B cell (primary cell): ENCODE measurements at regions of chr12 and their contacts with region 1.

Region 1: GRCh38 chr12:12716793-12717585 is at the start of gene CDKN1B:
- DNase-seq: peak; percentile 92
- ATAC-seq: peak; percentile 64
- H3K4me3 ChIP-seq: peak within 1 kb of the TSS; percentile 82 to 100 (median 96)
- H3K4me3 Mint-ChIP-seq: peak within 1 kb of the TSS; percentile 97
- H3K27ac ChIP-seq: peak within 1 kb of the TSS; percentile 94 to 96
- H3K27ac Mint-ChIP-seq: peak within 1 kb of the TSS; percentile 98
- H3K4me1 ChIP-seq: peaks cover 49 to 53% of the 10 kb centered on the region in 2 donors
- H3K4me1 Mint-ChIP-seq: peaks cover 66% of the 10 kb centered on the region
- H3K27me3 ChIP-seq: no peaks in the 10 kb centered on the region
- H3K27me3 Mint-ChIP-seq: no peaks in the 10 kb centered on the region
- CTCF ChIP-seq: no peak
- total RNA-seq, gene CDKN1B: 133 and 149 TPM in 2 replicates

Region 2: DNA sequence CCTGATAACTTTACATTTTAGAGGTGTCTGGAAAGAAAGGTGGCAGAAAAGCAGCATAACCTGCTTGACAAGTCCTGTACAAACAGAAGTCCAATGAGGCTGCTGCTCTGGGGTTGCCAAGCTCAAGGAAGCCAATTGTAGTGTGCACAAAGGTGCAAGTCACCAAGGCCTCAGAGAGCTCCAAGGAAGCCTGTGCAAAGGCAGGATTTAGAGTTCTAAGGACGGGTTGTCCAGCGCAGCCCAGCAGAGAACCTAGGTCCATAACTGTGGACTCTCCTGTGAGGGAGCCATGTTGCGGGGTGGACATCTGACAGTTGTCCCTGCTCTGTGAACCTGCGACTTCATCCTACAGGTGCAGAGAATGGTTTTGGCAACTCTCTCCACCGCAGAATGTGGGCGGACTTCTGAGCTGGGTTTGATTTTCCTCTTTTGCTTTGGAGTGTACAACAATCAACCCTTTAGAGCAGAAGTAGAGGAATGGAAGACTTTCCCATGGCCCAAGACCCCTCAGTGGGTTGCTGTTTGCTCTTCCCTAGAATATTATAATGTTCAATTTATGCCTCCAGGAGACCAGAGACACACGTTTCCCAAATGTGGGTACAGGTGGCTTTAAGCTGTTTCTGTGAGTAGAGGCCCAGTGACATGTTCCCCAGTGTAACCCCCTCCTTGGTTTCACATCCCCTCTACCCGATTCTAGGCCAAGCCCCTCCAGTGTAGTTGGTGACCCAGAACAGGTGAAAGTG is 986.5 kb before region 1 on chr12:
- CTCF ChIA-PET with region 1: no interaction called
- POLR2A ChIA-PET with region 1: no interaction called
- intact Hi-C with region 1: loop called (anchors 10 kb)
- DNase-seq: peak; percentile 83
- ATAC-seq: peak; percentile 80
- H3K4me3 ChIP-seq: no peak overlapping the region
- H3K4me3 Mint-ChIP-seq: peak overlapping the region; percentile 79
- H3K27ac ChIP-seq: peak overlapping the region; percentile 69 to 76
- H3K27ac Mint-ChIP-seq: peak overlapping the region; percentile 94
- H3K4me1 ChIP-seq: peaks cover 82 to 94% of the 10 kb centered on the region in 2 donors
- H3K4me1 Mint-ChIP-seq: peaks cover 92% of the 10 kb centered on the region
- H3K27me3 ChIP-seq: no peaks in the 10 kb centered on the region
- H3K27me3 Mint-ChIP-seq: no peaks in the 10 kb centered on the region
- CTCF ChIP-seq: no peak

Region 3: DNA sequence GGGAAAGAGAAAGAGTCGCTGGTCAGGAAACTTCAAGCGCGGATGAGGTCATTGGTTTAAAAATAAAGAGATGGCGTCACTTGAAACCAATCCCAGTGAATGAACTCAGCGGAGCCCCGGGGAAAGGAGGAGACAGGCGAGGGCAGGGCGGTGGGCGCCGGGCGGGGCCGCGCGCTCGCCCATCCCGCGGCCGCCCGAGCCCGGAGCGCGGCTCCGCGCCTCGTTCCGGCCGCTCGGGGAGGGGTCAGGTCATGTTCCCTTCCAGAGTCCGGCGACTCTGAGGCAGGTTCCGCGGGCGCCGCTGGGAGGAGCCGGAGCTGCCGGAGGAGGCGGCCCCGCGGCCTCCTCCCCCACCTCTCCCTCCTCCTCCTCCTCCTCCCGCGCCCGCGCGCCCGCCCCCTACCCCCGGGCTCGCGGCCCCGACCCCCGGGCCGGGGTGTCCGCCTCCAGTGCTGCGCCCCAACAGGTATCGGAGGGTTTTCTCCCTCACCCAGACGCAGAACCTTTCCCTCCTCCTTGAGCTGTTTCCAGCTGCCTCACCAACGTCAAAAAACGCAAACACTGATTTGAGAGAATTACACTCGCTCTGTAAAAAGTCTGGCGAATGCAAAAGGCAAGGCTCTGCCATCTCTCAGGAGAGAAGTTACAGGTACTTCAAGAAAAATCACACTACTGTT is 154.3 kb before region 1 on chr12 and contains the start of gene DUSP16:
- CTCF ChIA-PET with region 1: no interaction called
- POLR2A ChIA-PET with region 1: interaction called, 4 read pairs
- intact Hi-C with region 1: loop called (anchors 2 kb)
- DNase-seq: peak; percentile 90
- ATAC-seq: peak; percentile 70
- H3K4me3 ChIP-seq: peak within 1 kb of the TSS; percentile 55 to 78 (median 72)
- H3K4me3 Mint-ChIP-seq: peak within 1 kb of the TSS; percentile 95
- H3K27ac ChIP-seq: peak within 1 kb of the TSS; percentile 38 to 82
- H3K27ac Mint-ChIP-seq: peak within 1 kb of the TSS; percentile 92
- H3K4me1 ChIP-seq: peaks cover 17 to 18% of the 10 kb centered on the region in 2 donors
- H3K4me1 Mint-ChIP-seq: peaks cover 20% of the 10 kb centered on the region
- H3K27me3 ChIP-seq: peaks cover 0 to 9% (median 3%) of the 10 kb centered on the region in 4 experiments
- H3K27me3 Mint-ChIP-seq: peaks cover 8% of the 10 kb centered on the region
- CTCF ChIP-seq: no peak
- total RNA-seq, gene DUSP16: 5.6 and 5.9 TPM in 2 replicates

Region 4: GRCh38 chr12:12611512-12612306 is 105.3 kb before region 1 on chr12 and contains the start of gene CREBL2:
- CTCF ChIA-PET with region 1: no interaction called
- POLR2A ChIA-PET with region 1: interaction called, 6 read pairs
- intact Hi-C with region 1: loop called (anchors 2 kb)
- DNase-seq: peak; percentile 94
- ATAC-seq: peak; percentile 91
- H3K4me3 ChIP-seq: peak within 1 kb of the TSS; percentile 65 to 100 (median 89)
- H3K4me3 Mint-ChIP-seq: peak within 1 kb of the TSS; percentile 97
- H3K27ac ChIP-seq: peak within 1 kb of the TSS; percentile 92 to 95
- H3K27ac Mint-ChIP-seq: peak within 1 kb of the TSS; percentile 98
- H3K4me1 ChIP-seq: peaks cover 16 to 24% of the 10 kb centered on the region in 2 donors
- H3K4me1 Mint-ChIP-seq: peaks cover 32% of the 10 kb centered on the region
- H3K27me3 ChIP-seq: no peaks in the 10 kb centered on the region
- H3K27me3 Mint-ChIP-seq: no peaks in the 10 kb centered on the region
- CTCF ChIP-seq: no peak
- total RNA-seq, gene CREBL2: 20.2 and 22.1 TPM in 2 replicates

Region 5: GRCh38 chr12:12645485-12645884 is 71.5 kb before region 1 on chr12:
- CTCF ChIA-PET with region 1: interaction called, 27 read pairs
- POLR2A ChIA-PET with region 1: interaction called, 4 read pairs
- intact Hi-C with region 1: loop called (anchors 5 kb)
- DNase-seq: peak; percentile 75
- ATAC-seq: peak; percentile 83
- H3K4me3 ChIP-seq: no peak overlapping the region
- H3K4me3 Mint-ChIP-seq: no peak overlapping the region
- H3K27ac ChIP-seq: no peak overlapping the region
- H3K27ac Mint-ChIP-seq: no peak overlapping the region
- H3K4me1 ChIP-seq: no peaks in the 10 kb centered on the region
- H3K4me1 Mint-ChIP-seq: peaks cover 4% of the 10 kb centered on the region
- H3K27me3 ChIP-seq: no peaks in the 10 kb centered on the region
- H3K27me3 Mint-ChIP-seq: no peaks in the 10 kb centered on the region
- CTCF ChIP-seq: peak; percentile 71

Region 6: DNA sequence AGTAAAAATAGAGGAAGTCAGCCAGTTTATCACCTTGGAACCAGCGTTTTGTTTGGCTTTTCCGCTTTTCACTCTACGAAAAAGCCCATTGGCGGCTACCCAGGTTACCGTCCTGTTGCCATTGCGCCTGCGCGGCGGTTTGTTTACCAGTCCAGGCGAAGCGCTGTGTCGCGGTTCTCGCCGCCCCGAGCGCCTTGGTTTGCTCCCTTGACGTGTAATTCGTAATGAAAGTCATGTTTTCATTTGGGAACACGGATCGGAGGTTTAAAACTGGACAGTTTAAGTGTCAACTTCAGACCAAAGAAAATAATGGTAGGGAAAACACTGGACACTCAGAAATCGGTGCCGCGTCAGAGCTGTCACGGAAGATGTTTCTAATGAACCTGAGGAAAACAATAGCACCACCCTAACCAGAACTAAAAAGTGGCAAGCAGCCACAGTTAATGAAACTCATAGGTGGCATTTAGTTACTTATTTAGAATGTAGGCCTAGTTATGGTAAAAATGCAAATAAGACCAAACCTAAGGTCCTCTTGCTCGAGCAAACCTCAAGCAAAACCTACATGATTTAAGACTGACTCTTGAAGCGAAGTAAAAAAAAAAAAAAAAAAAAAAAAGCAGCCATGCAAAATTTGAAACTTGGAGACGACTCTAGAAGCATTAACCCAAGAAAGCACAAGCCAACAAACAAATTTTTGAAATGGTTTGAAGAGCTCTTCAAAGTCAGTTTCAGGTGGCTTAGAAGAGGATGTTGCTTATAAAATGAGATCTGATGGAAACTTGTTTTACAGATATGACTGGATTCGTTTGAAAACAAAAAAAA is 20.2 kb before region 1 on chr12:
- CTCF ChIA-PET with region 1: interaction called, 11 read pairs
- POLR2A ChIA-PET with region 1: interaction called, 40 read pairs
- intact Hi-C with region 1: loop called (anchors 1 kb)
- DNase-seq: peak; percentile 95
- ATAC-seq: peak; percentile 86
- H3K4me3 ChIP-seq: peak overlapping the region; percentile 66 to 77 (median 68)
- H3K4me3 Mint-ChIP-seq: peak overlapping the region; percentile 99
- H3K27ac ChIP-seq: peak overlapping the region; percentile 97 to 98
- H3K27ac Mint-ChIP-seq: peak overlapping the region; percentile 100
- H3K4me1 ChIP-seq: peaks cover 15 to 23% of the 10 kb centered on the region in 2 donors
- H3K4me1 Mint-ChIP-seq: peaks cover 32% of the 10 kb centered on the region
- H3K27me3 ChIP-seq: no peaks in the 10 kb centered on the region
- H3K27me3 Mint-ChIP-seq: no peaks in the 10 kb centered on the region
- CTCF ChIP-seq: no peak

Region 7: GRCh38 chr12:12704593-12705230 is 12.3 kb before region 1 on chr12:
- CTCF ChIA-PET with region 1: interaction called, 13 read pairs
- POLR2A ChIA-PET with region 1: interaction called, 6 read pairs
- intact Hi-C with region 1: loop called (anchors 1 kb)
- DNase-seq: peak; percentile 77
- ATAC-seq: peak; percentile 97
- H3K4me3 ChIP-seq: no peak overlapping the region
- H3K4me3 Mint-ChIP-seq: no peak overlapping the region
- H3K27ac ChIP-seq: no peak overlapping the region
- H3K27ac Mint-ChIP-seq: no peak overlapping the region
- H3K4me1 ChIP-seq: peaks cover 0 to 3% of the 10 kb centered on the region in 2 donors
- H3K4me1 Mint-ChIP-seq: peaks cover 7% of the 10 kb centered on the region
- H3K27me3 ChIP-seq: no peaks in the 10 kb centered on the region
- H3K27me3 Mint-ChIP-seq: no peaks in the 10 kb centered on the region
- CTCF ChIP-seq: peak; percentile 86

Region 8: GRCh38 chr12:12764824-12765223 is 47.8 kb after region 1 on chr12:
- CTCF ChIA-PET with region 1: no interaction called
- POLR2A ChIA-PET with region 1: no interaction called
- intact Hi-C with region 1: no loop called
- DNase-seq: no peak
- ATAC-seq: no peak
- H3K4me3 ChIP-seq: no peak overlapping the region
- H3K4me3 Mint-ChIP-seq: no peak overlapping the region
- H3K27ac ChIP-seq: no peak overlapping the region
- H3K27ac Mint-ChIP-seq: no peak overlapping the region
- H3K4me1 ChIP-seq: no peaks in the 10 kb centered on the region
- H3K4me1 Mint-ChIP-seq: no peaks in the 10 kb centered on the region
- H3K27me3 ChIP-seq: no peaks in the 10 kb centered on the region
- H3K27me3 Mint-ChIP-seq: no peaks in the 10 kb centered on the region
- CTCF ChIP-seq: no peak